Mammary epithelial cell (primary cell): ENCODE measurements at regions of chr15 and their contacts with region 1.

Region 1: GRCh38 chr15:70271422-70272088 is 173.8 kb upstream of the TLE3 start:
- DNase-seq: peak; percentile 93
- H3K4me3 ChIP-seq: no peak overlapping the region
- H3K27ac ChIP-seq: no peak overlapping the region
- H3K4me1 ChIP-seq: peaks cover 29% of the 10 kb centered on the region
- H3K27me3 ChIP-seq: no peaks in the 10 kb centered on the region
- CTCF ChIP-seq: no peak

Region 2: GRCh38 chr15:70182857-70183695 is 88.5 kb before region 1 on chr15:
- CTCF ChIA-PET with region 1: no interaction called
- dilution Hi-C with region 1: no loop called
- in situ Hi-C with region 1: no loop called
- intact Hi-C with region 1: no loop called
- DNase-seq: peak; percentile 21
- H3K4me3 ChIP-seq: no peak overlapping the region
- H3K27ac ChIP-seq: no peak overlapping the region
- H3K4me1 ChIP-seq: no peaks in the 10 kb centered on the region
- H3K27me3 ChIP-seq: peaks cover 2% of the 10 kb centered on the region
- CTCF ChIP-seq: no peak

Region 3: DNA sequence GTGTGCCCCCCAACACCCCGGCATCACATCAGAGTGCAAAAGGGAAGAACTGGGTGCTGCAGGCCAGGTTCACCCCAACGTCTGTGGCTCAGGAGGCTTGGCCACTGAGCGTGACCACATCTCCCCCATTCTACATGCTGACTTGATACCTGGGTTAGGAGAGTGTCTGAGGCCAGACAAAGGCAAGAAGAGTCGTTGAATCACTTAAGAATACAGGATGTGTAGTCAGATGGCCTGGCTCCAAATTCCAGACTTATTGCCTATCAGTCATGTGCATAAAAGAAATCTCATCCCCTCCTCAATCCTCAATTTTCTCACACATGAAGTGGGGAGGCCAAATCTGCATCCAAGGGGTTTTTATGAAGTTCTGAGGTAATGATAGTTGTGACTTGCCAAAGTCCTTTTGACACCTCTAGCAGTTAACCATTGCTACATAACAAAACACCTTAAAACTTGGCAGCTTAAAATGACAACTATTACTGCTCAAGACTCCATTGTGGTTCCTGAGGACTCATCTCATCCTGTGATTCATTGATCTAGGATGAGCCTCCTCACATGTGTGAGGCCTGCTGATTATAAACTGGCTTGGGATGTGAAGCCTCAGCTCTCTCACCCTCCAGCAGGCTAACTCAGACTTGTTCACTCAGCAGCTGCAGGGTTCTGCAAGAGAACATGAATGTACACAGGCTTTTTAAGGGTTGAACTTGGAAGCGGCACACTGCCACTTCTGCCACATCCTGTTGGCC is 35.0 kb before region 1 on chr15:
- CTCF ChIA-PET with region 1: no interaction called
- dilution Hi-C with region 1: no loop called
- in situ Hi-C with region 1: no loop called
- intact Hi-C with region 1: loop called (anchors 1 kb)
- DNase-seq: peak; percentile 92
- H3K4me3 ChIP-seq: no peak overlapping the region
- H3K27ac ChIP-seq: peak overlapping the region; percentile 53
- H3K4me1 ChIP-seq: peaks cover 27% of the 10 kb centered on the region
- H3K27me3 ChIP-seq: no peaks in the 10 kb centered on the region
- CTCF ChIP-seq: no peak

Region 4: DNA sequence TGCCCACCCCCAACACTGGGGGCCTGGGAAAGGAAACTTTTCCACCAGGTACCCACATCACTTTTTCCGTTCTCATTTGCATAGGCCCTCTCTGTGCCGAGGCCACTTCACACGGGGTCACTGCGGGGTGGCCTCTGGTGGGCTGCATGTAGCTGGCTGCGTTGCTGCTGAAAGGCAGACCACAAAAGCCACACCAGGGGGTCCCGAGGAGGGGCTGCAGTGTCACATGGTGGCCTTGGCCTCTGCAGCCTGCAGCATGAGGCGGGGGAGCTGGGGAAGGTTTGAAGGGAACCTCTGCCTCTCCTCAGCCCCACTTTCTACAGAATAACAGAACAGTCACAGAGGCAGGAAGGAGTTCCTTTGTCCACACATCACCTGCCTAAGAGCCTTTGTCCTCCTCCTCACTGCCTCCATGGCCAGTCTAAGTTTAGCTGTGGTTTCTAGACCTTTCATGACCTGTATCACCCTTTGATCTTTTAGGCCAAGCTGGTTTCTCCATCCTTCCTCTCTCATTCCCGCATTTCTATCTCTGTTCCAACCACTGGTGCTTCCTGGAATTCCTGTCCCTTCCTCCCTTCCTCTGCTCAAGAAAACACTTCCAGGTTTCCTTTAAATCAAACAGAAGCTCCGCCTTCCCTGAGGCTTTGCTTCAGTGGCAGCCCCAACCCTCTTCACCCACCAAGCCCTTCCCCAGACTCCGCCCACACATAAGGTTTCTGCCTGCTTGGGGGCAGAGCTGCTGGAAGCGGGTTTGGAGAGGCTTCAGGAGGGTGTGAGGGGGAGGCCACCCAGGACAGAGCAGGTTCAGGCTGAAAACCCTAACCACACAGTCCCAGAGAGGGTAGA is 23.2 kb before region 1 on chr15:
- CTCF ChIA-PET with region 1: no interaction called
- dilution Hi-C with region 1: no loop called
- in situ Hi-C with region 1: no loop called
- intact Hi-C with region 1: no loop called
- DNase-seq: no peak
- H3K4me3 ChIP-seq: no peak overlapping the region
- H3K27ac ChIP-seq: no peak overlapping the region
- H3K4me1 ChIP-seq: peaks cover 18% of the 10 kb centered on the region
- H3K27me3 ChIP-seq: no peaks in the 10 kb centered on the region
- CTCF ChIP-seq: no peak

Region 5: GRCh38 chr15:70308011-70308734 is 36.6 kb after region 1 on chr15:
- CTCF ChIA-PET with region 1: no interaction called
- dilution Hi-C with region 1: no loop called
- in situ Hi-C with region 1: no loop called
- intact Hi-C with region 1: no loop called
- DNase-seq: no peak
- H3K4me3 ChIP-seq: no peak overlapping the region
- H3K27ac ChIP-seq: no peak overlapping the region
- H3K4me1 ChIP-seq: no peaks in the 10 kb centered on the region
- H3K27me3 ChIP-seq: no peaks in the 10 kb centered on the region
- CTCF ChIP-seq: no peak

Region 6: DNA sequence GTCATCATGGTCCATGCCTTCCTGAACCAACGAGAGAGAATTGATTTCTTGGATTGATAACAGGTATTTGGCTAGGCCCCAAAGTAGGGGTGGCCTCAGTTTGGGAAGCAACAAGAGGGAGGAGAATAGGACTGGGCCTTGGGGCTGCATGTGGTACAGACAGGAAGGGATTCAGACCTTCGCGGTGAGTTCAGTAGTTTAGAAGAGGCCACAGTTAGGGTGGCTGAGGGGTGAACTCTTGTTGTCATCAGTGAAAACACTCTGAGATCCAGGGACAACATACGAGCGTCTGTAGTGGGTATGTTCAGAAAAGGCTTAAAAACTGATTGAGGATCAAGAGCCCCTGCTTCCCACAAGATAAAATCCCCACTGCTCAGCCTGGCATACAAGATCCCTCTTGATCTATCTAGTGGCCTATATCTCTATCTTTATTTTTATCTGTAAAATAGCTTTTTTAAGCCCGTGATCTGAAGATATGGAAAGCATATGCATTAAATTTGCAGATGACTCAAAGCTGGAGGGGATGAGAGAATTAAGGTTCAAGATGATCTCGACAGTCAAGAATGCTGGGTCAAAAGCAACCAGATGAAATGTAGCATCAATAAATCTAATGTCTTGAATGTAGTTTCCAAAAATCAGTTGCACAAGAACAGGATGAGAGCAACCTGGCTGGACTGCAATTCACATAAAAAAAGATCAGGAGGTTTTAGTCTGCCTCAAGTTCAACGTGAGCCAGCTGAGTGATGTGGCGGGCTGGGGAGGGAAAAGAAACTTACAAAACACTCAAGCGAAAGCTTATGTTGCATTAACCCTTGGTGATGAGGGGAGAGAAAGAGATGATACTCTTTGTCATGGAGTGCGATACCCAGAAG is 47.3 kb after region 1 on chr15:
- CTCF ChIA-PET with region 1: no interaction called
- dilution Hi-C with region 1: loop called (anchors 5 kb)
- in situ Hi-C with region 1: no loop called
- intact Hi-C with region 1: no loop called
- DNase-seq: peak; percentile 17
- H3K4me3 ChIP-seq: no peak overlapping the region
- H3K27ac ChIP-seq: no peak overlapping the region
- H3K4me1 ChIP-seq: peaks cover 8% of the 10 kb centered on the region
- H3K27me3 ChIP-seq: no peaks in the 10 kb centered on the region
- CTCF ChIP-seq: no peak

Region 7: DNA sequence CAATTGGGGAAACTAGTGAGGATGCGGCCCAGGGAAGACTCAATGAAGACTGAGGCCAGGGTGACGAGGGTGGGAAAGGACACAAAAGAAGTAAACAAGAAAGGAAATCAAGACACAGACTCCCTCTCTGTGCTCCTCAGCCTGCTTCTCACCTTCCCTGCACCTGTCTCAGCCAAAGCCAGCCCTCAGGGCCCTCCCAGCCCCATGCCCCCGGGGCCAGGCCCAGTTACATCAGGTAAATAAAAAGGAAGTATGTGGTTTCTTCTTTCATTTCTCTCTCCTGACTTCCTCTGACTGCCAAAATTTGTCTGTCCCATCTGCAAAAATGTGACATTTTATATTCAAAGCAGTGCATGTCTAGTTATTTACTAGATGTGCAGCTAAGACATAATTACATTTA is 163.8 kb after region 1 on chr15:
- CTCF ChIA-PET with region 1: no interaction called
- dilution Hi-C with region 1: no loop called
- in situ Hi-C with region 1: no loop called
- intact Hi-C with region 1: loop called (anchors 10 kb)
- DNase-seq: no peak
- H3K4me3 ChIP-seq: no peak overlapping the region
- H3K27ac ChIP-seq: no peak overlapping the region
- H3K4me1 ChIP-seq: peaks cover 10% of the 10 kb centered on the region
- H3K27me3 ChIP-seq: no peaks in the 10 kb centered on the region
- CTCF ChIP-seq: no peak